ENCODE measurements at regions of chr14 and their contacts with region 1.

Region 1: GRCh38 chr14:79856381-79856780 is 354.9 kb downstream of the DIO2 start:
- DNase-seq: no peak
- H3K4me3 ChIP-seq: no peak overlapping the region
- H3K27ac ChIP-seq: no peak overlapping the region
- H3K4me1 ChIP-seq: peaks cover 39% of the 10 kb centered on the region
- H3K27me3 ChIP-seq: peaks cover 4% of the 10 kb centered on the region
- CTCF ChIP-seq: no peak

Region 2: DNA sequence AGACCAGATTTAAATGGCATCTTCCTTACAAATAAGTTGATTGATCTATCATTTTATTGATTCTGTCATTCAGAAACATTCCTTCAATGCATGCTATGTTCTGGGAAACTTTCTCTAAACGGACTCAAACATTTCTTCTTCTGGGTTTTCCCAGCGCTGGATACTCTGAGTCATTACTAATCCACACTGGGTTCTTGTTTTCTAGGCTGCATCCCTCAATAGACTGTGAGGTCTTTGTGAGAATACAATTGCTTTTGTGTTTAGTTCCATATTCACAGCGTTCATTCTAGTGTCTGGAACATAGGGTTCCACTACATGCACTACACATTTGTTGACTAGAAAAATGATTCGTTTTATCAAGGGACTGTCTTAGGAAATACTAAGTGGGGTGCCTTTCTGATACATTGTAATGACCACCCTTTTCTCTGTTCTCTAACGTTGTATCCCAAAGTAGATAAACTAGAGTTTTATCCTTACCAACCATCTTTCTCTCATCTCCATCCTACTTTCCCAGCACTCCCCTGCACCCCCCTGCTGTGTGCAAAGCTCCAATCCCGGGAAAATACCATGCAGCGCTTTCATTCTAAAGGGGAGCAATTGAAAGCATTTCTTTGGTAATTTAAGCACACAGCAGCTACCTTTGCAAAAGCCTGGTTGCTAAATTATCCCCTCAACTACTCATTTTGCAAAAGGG is 523.7 kb before region 1 on chr14:
- CTCF ChIA-PET with region 1: no interaction called
- POLR2A ChIA-PET with region 1: no interaction called
- intact Hi-C with region 1: no loop called
- DNase-seq: no peak
- H3K4me3 ChIP-seq: no peak overlapping the region
- H3K27ac ChIP-seq: no peak overlapping the region
- H3K4me1 ChIP-seq: no peaks in the 10 kb centered on the region
- H3K27me3 ChIP-seq: peaks cover 3% of the 10 kb centered on the region
- CTCF ChIP-seq: no peak

Region 3: GRCh38 chr14:79404874-79405511 is 451.4 kb before region 1 on chr14:
- CTCF ChIA-PET with region 1: no interaction called
- POLR2A ChIA-PET with region 1: no interaction called
- intact Hi-C with region 1: no loop called
- DNase-seq: no peak
- H3K4me3 ChIP-seq: no peak overlapping the region
- H3K27ac ChIP-seq: no peak overlapping the region
- H3K4me1 ChIP-seq: no peaks in the 10 kb centered on the region
- H3K27me3 ChIP-seq: no peaks in the 10 kb centered on the region
- CTCF ChIP-seq: no peak

Region 4: GRCh38 chr14:79809849-79810612 is 46.4 kb before region 1 on chr14:
- CTCF ChIA-PET with region 1: no interaction called
- POLR2A ChIA-PET with region 1: no interaction called
- intact Hi-C with region 1: loop called (anchors 5 kb)
- DNase-seq: peak; percentile 72
- H3K4me3 ChIP-seq: no peak overlapping the region
- H3K27ac ChIP-seq: no peak overlapping the region
- H3K4me1 ChIP-seq: no peaks in the 10 kb centered on the region
- H3K27me3 ChIP-seq: no peaks in the 10 kb centered on the region
- CTCF ChIP-seq: peak; percentile 60

Region 5: GRCh38 chr14:79896009-79896408 is 39.6 kb after region 1 on chr14:
- CTCF ChIA-PET with region 1: no interaction called
- POLR2A ChIA-PET with region 1: no interaction called
- intact Hi-C with region 1: no loop called
- DNase-seq: no peak
- H3K4me3 ChIP-seq: no peak overlapping the region
- H3K27ac ChIP-seq: no peak overlapping the region
- H3K4me1 ChIP-seq: peaks cover 4% of the 10 kb centered on the region
- H3K27me3 ChIP-seq: no peaks in the 10 kb centered on the region
- CTCF ChIP-seq: no peak

Region 6: GRCh38 chr14:80003138-80003537 is 146.8 kb after region 1 on chr14:
- CTCF ChIA-PET with region 1: no interaction called
- POLR2A ChIA-PET with region 1: no interaction called
- intact Hi-C with region 1: no loop called
- DNase-seq: no peak
- H3K4me3 ChIP-seq: no peak overlapping the region
- H3K27ac ChIP-seq: no peak overlapping the region
- H3K4me1 ChIP-seq: no peaks in the 10 kb centered on the region
- H3K27me3 ChIP-seq: no peaks in the 10 kb centered on the region
- CTCF ChIP-seq: no peak